ENCODE measurements at regions of chr2 and their contacts with region 1.

Region 1: DNA sequence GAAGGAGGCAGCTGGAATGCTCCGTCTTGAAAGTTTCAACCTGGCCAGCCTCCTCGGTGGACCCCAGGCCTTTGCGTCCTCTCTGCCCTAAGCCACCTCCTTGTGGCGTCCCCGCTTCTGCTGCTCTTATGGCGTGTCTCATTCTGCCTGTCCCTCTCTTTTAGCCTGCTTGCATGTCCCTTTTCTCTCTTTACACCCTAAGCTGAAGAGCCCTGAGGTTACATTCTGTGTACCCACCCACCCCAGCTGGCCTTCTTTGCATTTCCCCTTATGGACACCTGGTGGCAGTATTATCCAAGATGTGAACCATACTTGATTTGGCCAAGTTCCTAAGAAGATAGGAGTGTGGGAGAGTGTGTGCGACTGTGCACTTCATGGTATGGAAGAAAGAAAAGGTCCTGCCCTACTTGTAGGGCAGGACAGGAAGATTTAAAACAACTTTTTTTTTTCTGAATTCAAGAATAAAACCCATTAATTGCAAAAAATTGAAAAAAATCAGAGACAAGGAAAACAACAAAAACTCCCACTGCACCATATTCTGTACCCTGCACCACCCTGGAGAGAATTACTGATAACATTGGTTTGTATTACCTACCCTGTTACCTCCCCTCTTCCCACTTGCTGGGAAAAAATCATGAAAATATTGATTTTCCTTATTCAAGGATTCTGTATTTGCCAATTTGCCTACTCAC is 77.4 kb downstream of the DYSF start:
- DNase-seq: no peak
- ATAC-seq: peak in 6 of 8 donors; percentile 28 to 55 (median 48)
- H3K4me3 ChIP-seq: no peak overlapping the region
- H3K27ac ChIP-seq: no peak overlapping the region
- H3K4me1 ChIP-seq: peaks cover 0 to 12% (median 0%) of the 10 kb centered on the region in 9 donors
- H3K27me3 ChIP-seq: no peaks in the 10 kb centered on the region
- CTCF ChIP-seq: peak; percentile 35 to 77 (median 64)

Region 2: DNA sequence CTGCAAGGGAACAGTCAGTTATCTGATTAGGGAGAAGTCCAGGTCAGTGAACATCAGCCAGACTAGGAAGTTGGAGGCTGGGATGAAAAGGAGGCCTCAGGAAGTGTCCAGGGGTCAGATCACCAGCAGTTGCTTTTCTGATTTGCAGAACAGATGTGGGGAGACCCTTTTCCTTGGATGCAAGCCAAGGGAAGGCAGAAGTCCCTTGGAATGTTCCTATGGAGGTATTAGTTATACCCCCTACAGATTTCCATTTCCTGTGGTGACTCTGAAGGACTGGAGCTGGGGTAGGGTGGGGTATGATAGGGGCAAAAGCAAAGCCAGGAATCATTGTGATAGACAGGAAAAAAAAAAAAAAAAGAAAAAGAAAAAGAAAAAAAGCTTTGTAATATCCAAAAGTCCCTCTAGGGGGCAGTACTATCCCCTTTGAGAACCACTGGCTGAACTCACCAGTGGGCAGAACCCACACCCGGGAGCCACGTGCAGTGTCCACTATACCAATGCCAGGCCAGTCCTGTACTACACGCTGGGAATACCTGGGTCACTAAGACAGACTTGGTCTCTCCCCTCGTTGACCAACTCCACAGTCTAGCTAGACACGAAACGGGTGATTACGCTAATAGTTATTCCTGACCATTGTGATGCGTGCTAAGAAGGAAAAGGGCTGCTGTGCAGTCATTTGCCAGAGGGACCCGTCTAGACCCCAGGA is 70.0 kb before region 1 on chr2:
- intact Hi-C with region 1: no loop called
- DNase-seq: peak in 1 of 2 donors; percentile 41
- ATAC-seq: peak in 7 of 8 donors; percentile 13 to 45 (median 34)
- H3K4me3 ChIP-seq: no peak overlapping the region
- H3K27ac ChIP-seq: peak overlapping the region in 6 of 10 donors; percentile 17 to 92 (median 68)
- H3K4me1 ChIP-seq: peaks cover 15 to 93% (median 71%) of the 10 kb centered on the region in 9 donors
- H3K27me3 ChIP-seq: peaks cover 0 to 15% (median 0%) of the 10 kb centered on the region in 7 donors
- CTCF ChIP-seq: peak; percentile 58 to 78 (median 69)

Region 3: GRCh38 chr2:72757177-72757775 is 1226.5 kb after region 1 on chr2:
- intact Hi-C with region 1: loop called in 1 of 10 experiments (anchors 10 kb)
- DNase-seq: peak in 1 of 2 donors; percentile 55
- ATAC-seq: peak; percentile 45 to 83 (median 73)
- H3K4me3 ChIP-seq: no peak overlapping the region
- H3K27ac ChIP-seq: peak overlapping the region in 9 of 10 donors; percentile 2 to 72 (median 30)
- H3K4me1 ChIP-seq: peaks cover 3 to 49% (median 32%) of the 10 kb centered on the region in 9 donors
- H3K27me3 ChIP-seq: no peaks in the 10 kb centered on the region
- CTCF ChIP-seq: no peak

Measured in heart right ventricle (tissue), 16 donors.